PC-9 (cell line): ENCODE measurements at regions of chr2 and their contacts with region 1.

Region 1: GRCh38 chr2:48600204-48600813 is 17.3 kb upstream of the GTF2A1L start:
- DNase-seq: peak in 1 of 2 experiments; percentile 16
- H3K4me3 ChIP-seq: no peak overlapping the region
- H3K27ac ChIP-seq: no peak overlapping the region
- H3K4me1 ChIP-seq: no peaks in the 10 kb centered on the region
- H3K27me3 ChIP-seq: no peaks in the 10 kb centered on the region
- CTCF ChIP-seq: peak; percentile 90

Region 2: DNA sequence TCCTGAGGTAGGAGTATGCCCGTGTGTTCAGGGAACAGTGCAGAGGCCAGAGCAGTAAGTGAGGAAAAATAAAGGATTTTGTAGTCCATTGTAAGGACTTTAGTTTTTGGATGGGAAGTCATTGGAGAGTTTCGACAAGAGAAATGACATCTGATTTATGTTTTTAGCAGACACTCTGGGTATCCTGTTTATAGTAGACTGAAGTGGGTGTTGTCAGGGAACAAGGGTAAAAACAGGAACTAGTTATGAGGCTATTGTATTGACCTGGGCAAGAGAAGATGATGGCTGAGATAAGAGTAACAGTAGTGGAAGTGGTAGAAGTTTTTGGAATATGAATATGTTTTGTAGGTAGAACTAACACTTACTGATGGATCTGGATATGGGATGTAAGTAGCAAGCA is 77.1 kb after region 1 on chr2:
- CTCF ChIA-PET with region 1: interaction called, 12 read pairs
- POLR2A ChIA-PET with region 1: no interaction called
- intact Hi-C with region 1: no loop called
- DNase-seq: no peak
- H3K4me3 ChIP-seq: no peak overlapping the region
- H3K27ac ChIP-seq: no peak overlapping the region
- H3K4me1 ChIP-seq: no peaks in the 10 kb centered on the region
- H3K27me3 ChIP-seq: no peaks in the 10 kb centered on the region
- CTCF ChIP-seq: no peak

Region 3: DNA sequence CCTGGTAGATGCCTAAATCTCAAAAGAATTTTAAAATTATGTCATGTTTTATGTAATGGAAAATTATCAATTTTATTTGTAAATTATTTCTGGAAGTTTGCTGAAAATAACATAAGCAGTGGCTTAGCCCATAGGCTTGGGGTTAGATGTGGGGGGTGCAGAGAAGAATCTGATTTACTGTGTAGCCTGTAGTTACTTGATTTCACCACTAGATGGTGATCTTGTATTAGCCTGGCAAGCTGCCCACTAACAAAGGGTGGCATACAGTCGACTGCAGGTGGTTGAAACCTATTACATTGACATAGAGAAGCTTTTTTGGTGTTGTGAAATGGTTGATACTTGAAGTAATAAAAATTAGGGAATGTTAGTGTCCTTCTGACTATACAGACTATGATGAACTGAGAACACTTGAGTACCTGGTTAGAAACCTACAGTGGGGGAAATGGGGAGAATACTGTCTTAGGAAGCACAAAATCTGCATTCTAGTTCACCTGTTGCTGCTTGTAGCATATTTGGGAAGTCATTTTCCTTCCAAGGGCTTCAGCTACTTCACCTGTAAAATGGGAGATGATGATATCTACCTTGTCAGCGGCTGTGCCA is 346.2 kb after region 1 on chr2:
- CTCF ChIA-PET with region 1: no interaction called
- POLR2A ChIA-PET with region 1: no interaction called
- intact Hi-C with region 1: loop called (anchors 5 kb)
- DNase-seq: peak; percentile 24 to 49
- H3K4me3 ChIP-seq: no peak overlapping the region
- H3K27ac ChIP-seq: no peak overlapping the region
- H3K4me1 ChIP-seq: no peaks in the 10 kb centered on the region
- H3K27me3 ChIP-seq: peaks cover 36% of the 10 kb centered on the region
- CTCF ChIP-seq: peak; percentile 99

Region 4: GRCh38 chr2:50143822-50144575 is 1543.7 kb after region 1 on chr2:
- CTCF ChIA-PET with region 1: no interaction called
- POLR2A ChIA-PET with region 1: no interaction called
- intact Hi-C with region 1: loop called (anchors 5 kb)
- DNase-seq: peak; percentile 4 to 37
- H3K4me3 ChIP-seq: peak overlapping the region; percentile 54
- H3K27ac ChIP-seq: no peak overlapping the region
- H3K4me1 ChIP-seq: no peaks in the 10 kb centered on the region
- H3K27me3 ChIP-seq: no peaks in the 10 kb centered on the region
- CTCF ChIP-seq: peak; percentile 83

Region 5: GRCh38 chr2:50492477-50492851 is 1892.2 kb after region 1 on chr2:
- CTCF ChIA-PET with region 1: no interaction called
- POLR2A ChIA-PET with region 1: no interaction called
- intact Hi-C with region 1: loop called (anchors 5 kb)
- DNase-seq: no peak
- H3K4me3 ChIP-seq: no peak overlapping the region
- H3K27ac ChIP-seq: no peak overlapping the region
- H3K4me1 ChIP-seq: no peaks in the 10 kb centered on the region
- H3K27me3 ChIP-seq: 0 out of 2 replicates have a peak, but pooled peaks cover 5% of the 10 kb centered on the region
- CTCF ChIP-seq: peak; percentile 85